Naive thymus-derived CD4-positive, alpha-beta T cell (primary cell): ENCODE measurements at regions of chr1 and their contacts with region 1.

Region 1: GRCh38 chr1:161290779-161291178 is 19.0 kb downstream of the MPZ start:
- DNase-seq: no peak
- ATAC-seq: no peak
- H3K4me3 ChIP-seq: no peak overlapping the region
- H3K4me3 Mint-ChIP-seq: no peak overlapping the region
- H3K27ac ChIP-seq: no peak overlapping the region
- H3K27ac Mint-ChIP-seq: peak overlapping the region in 2 of 9 donors; percentile 28 to 61
- H3K4me1 ChIP-seq: no peaks in the 10 kb centered on the region
- H3K4me1 Mint-ChIP-seq: peaks cover 0 to 6% (median 0%) of the 10 kb centered on the region in 7 donors
- H3K27me3 ChIP-seq: no peaks in the 10 kb centered on the region
- H3K27me3 Mint-ChIP-seq: no peaks in the 10 kb centered on the region

Region 2: DNA sequence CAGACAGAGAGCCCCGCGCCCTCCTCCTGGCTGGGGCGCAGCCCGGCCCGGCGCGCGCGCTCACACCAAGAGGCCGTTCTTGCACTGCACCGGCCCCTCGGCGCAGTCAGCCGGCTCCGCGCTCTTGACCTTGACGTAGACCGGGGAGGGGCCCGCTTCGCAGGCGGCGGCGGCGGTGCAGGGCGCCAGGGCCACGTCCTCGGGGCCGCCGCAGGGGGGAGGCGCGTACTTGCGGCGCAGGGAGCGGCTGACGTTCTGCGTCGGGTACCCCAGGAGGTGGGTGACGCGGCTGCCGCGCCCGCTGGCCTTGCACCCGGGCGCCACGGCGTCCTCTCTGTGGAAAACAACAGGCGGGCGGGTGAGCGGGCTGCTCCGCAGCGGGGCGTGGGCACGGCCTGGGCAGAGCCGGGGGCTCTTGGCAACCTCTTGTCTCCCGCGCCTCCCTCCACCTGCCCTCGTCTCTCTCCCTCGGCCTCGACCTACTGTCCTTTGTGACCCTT is 1436.0 kb before region 1 on chr1:
- CTCF ChIA-PET with region 1: no interaction called
- POLR2A ChIA-PET with region 1: no interaction called
- intact Hi-C with region 1: no loop called
- DNase-seq: peak; percentile 53 to 72 (median 70)
- ATAC-seq: peak; percentile 91
- H3K4me3 ChIP-seq: peak overlapping the region; percentile 69
- H3K4me3 Mint-ChIP-seq: peak overlapping the region; percentile 80 to 96 (median 91)
- H3K27ac ChIP-seq: peak overlapping the region; percentile 75
- H3K27ac Mint-ChIP-seq: peak overlapping the region in 8 of 9 donors; percentile 67 to 94 (median 88)
- H3K4me1 ChIP-seq: peaks cover 0 to 3% of the 10 kb centered on the region in 2 donors
- H3K4me1 Mint-ChIP-seq: peaks cover 14 to 37% (median 23%) of the 10 kb centered on the region in 7 donors
- H3K27me3 ChIP-seq: no peaks in the 10 kb centered on the region
- H3K27me3 Mint-ChIP-seq: peaks cover 0 to 32% (median 0%) of the 10 kb centered on the region in 5 donors

Region 3: GRCh38 chr1:161209790-161210409 is 80.9 kb before region 1 on chr1:
- CTCF ChIA-PET with region 1: interaction called, 18 read pairs
- POLR2A ChIA-PET with region 1: interaction called, 7 read pairs
- intact Hi-C with region 1: loop called in 1 of 2 experiments (anchors 1 kb)
- DNase-seq: peak; percentile 53 to 79 (median 73)
- ATAC-seq: peak; percentile 98
- H3K4me3 ChIP-seq: no peak overlapping the region
- H3K4me3 Mint-ChIP-seq: no peak overlapping the region
- H3K27ac ChIP-seq: peak overlapping the region; percentile 27
- H3K27ac Mint-ChIP-seq: peak overlapping the region in 8 of 9 donors; percentile 60 to 89 (median 66)
- H3K4me1 ChIP-seq: peaks cover 0 to 31% of the 10 kb centered on the region in 2 donors
- H3K4me1 Mint-ChIP-seq: peaks cover 12 to 49% (median 41%) of the 10 kb centered on the region in 7 donors
- H3K27me3 ChIP-seq: no peaks in the 10 kb centered on the region
- H3K27me3 Mint-ChIP-seq: no peaks in the 10 kb centered on the region

Region 4: GRCh38 chr1:161382214-161383019 is 91.6 kb after region 1 on chr1:
- CTCF ChIA-PET with region 1: interaction called, 3 read pairs
- POLR2A ChIA-PET with region 1: no interaction called
- intact Hi-C with region 1: loop called in 1 of 2 experiments (anchors 1 kb)
- DNase-seq: peak in 6 of 9 donors; percentile 40 to 68 (median 59)
- ATAC-seq: peak; percentile 91
- H3K4me3 ChIP-seq: no peak overlapping the region
- H3K4me3 Mint-ChIP-seq: no peak overlapping the region
- H3K27ac ChIP-seq: no peak overlapping the region
- H3K27ac Mint-ChIP-seq: peak overlapping the region in 3 of 9 donors; percentile 53 to 76 (median 73)
- H3K4me1 ChIP-seq: peaks cover 0 to 3% of the 10 kb centered on the region in 2 donors
- H3K4me1 Mint-ChIP-seq: peaks cover 0 to 19% (median 13%) of the 10 kb centered on the region in 7 donors
- H3K27me3 ChIP-seq: no peaks in the 10 kb centered on the region
- H3K27me3 Mint-ChIP-seq: no peaks in the 10 kb centered on the region